Right lobe of liver (tissue), 6 donors: ENCODE measurements at regions of chr1 and their contacts with region 1.

Region 1: GRCh38 chr1:45011837-45012638 is at the start of gene UROD:
- DNase-seq: peak; percentile 88 to 93 (median 91)
- ATAC-seq: peak; percentile 82 to 87 (median 83)
- H3K4me3 ChIP-seq: peak within 1 kb of the TSS; percentile 87 to 100 (median 92)
- H3K27ac ChIP-seq: peak within 1 kb of the TSS; percentile 48 to 75 (median 72)
- H3K4me1 ChIP-seq: peaks cover 0 to 29% (median 14%) of the 10 kb centered on the region in 4 donors
- H3K27me3 ChIP-seq: no peaks in the 10 kb centered on the region
- CTCF ChIP-seq: no peak
- POLR2A ChIP-seq: peak; percentile 62
- total RNA-seq, gene UROD: 57.8 to 92.8 (median 71.2) TPM

Region 2: DNA sequence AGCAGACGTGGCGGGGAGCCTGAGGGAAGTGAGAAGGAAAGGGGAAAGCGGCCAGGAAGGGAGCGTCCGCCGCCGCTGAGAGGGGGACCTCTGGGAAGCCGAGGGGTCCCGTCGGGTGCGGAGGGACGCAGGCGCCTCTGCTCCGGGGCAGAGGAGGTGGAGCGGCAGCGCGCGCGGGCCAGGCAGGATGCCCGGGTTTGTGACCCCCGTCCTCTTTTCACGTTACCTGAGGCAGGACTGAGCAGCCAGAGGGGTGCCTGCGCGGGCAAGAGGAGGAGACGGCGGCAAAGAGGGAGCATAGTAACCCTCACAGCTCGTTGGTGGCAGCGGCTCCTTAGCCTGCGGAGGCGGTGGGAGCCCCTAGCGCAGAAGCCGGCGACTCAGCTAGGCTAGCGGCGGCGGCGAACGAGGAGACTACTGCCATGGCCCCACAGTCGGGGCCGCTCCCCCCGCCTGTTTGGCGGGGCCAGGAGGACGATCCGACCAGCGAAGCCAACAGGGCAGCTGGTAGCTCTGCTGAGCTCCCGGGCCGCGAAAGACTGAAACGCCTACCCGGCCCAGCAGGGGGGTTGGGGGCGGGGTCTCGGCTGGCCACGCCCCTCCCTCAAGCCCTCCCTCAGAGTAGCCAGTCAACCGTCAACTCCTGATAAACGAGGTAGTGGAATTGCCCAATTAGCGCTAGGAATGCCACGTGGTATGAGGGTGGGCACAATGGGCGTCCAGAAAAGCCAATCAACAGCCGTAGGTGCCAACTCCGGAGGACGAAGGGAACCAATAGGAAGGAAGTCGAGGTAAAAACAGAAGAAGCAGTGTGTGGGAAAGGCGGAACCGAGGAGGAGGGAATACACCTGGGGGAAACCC is 478.8 kb after region 1 on chr1 and contains the start of gene TESK2:
- intact Hi-C with region 1: loop called in 1 of 2 experiments (anchors 10 kb)
- DNase-seq: peak; percentile 95 to 99 (median 97)
- ATAC-seq: peak; percentile 94 to 97 (median 96)
- H3K4me3 ChIP-seq: peak within 1 kb of the TSS; percentile 61 to 94 (median 79)
- H3K27ac ChIP-seq: peak within 1 kb of the TSS; percentile 71 to 89 (median 81)
- H3K4me1 ChIP-seq: peaks cover 0 to 16% (median 0%) of the 10 kb centered on the region in 4 donors
- H3K27me3 ChIP-seq: no peaks in the 10 kb centered on the region
- CTCF ChIP-seq: peak in 1 of 4 donors; percentile 47
- POLR2A ChIP-seq: peak; percentile 95
- total RNA-seq, gene TESK2: 2.7 to 5.5 (median 4.3) TPM